MCF 10A (cell line): ENCODE measurements at regions of chr5 and their contacts with region 1.

Region 1: DNA sequence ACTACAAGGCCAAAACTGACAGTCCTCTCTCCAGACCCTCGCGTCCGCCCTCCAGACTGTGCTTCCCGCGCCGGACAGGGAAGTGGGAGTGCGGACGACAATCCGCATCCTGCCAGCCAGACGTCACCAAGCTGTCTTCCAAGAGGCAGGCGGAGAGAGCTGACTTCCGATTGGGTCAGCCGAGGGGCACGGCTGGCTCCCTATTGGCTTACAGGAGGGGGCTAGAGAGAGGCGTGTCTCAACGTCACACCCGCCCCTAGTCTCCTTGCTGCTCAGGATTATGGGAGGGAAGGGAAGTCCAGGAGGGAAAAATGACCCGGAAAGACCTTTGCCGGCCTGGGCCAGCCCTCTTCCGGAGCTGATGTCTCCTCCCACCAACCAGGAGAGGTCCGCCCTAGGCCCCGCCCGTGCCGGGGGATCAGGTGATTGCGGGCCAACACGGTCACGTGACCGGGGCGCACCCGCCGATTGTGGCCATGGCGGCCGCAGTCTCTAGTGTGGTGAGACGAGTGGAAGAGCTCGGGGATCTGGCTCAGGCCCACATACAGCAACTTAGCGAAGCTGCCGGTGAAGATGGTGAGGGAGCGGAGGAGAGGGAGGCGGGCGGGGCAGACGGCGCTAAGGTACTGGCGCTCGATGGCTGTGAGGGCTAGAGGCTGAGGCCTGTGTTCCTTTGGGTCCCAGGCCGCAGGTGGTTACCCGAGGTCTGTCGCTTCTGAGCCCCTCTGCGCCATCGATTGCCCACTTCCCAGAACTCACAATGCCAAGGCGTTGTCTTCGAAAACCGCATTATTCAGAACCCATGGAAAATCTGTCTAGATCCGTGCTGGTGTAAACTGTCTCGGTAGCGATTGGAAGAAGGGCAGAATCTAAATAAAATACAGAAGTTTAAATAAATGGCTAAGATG is at the start of gene RIMOC1:
- DNase-seq: peak; percentile 99
- H3K4me3 Mint-ChIP-seq: peak within 1 kb of the TSS; percentile 97
- H3K27ac Mint-ChIP-seq: peak within 1 kb of the TSS; percentile 100
- H3K4me1 Mint-ChIP-seq: peaks cover 36% of the 10 kb centered on the region
- H3K27me3 Mint-ChIP-seq: no peaks in the 10 kb centered on the region
- CTCF ChIP-seq: no peak
- total RNA-seq, gene RIMOC1: 40.4 and 45.4 TPM in 2 replicates

Region 2: GRCh38 chr5:41610402-41610801 is 293.7 kb before region 1 on chr5:
- CTCF ChIA-PET with region 1: no interaction called
- POLR2A ChIA-PET with region 1: no interaction called
- intact Hi-C with region 1: no loop called
- DNase-seq: no peak
- H3K4me3 Mint-ChIP-seq: no peak overlapping the region
- H3K27ac Mint-ChIP-seq: no peak overlapping the region
- H3K4me1 Mint-ChIP-seq: no peaks in the 10 kb centered on the region
- H3K27me3 Mint-ChIP-seq: peaks cover 24% of the 10 kb centered on the region
- CTCF ChIP-seq: no peak

Region 3: DNA sequence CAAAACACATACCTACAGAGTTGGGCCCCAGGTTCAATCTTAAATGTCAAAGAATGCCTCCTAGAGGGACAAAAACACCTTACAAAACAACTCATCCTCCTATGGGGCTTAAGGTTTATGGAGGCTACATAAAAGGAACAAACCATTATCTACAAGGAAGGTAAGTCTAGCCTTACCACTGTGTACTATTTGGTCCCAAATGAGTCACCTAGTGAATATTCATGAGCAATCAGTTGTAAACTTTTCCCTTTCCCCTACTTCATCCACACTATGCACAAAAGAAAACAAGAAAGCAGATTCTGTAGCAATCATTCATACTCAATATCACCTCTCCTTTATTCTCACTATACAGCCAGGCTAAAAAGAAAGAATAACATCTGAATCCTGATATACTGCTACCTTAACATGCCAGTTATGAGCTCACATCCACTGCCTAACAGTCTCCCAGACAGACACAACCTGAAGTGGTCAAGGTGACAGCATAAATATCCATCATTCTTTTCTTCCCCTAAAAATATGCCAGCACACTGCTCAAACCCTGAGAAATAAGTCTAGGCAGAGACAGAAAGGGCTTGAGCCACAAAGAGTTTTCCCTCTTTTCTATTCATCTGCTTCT is 40.2 kb before region 1 on chr5:
- CTCF ChIA-PET with region 1: interaction called, 4 read pairs
- POLR2A ChIA-PET with region 1: interaction called, 57 read pairs
- intact Hi-C with region 1: loop called (anchors 1 kb)
- DNase-seq: no peak
- H3K4me3 Mint-ChIP-seq: no peak overlapping the region
- H3K27ac Mint-ChIP-seq: peak overlapping the region; percentile 58
- H3K4me1 Mint-ChIP-seq: peaks cover 31% of the 10 kb centered on the region
- H3K27me3 Mint-ChIP-seq: no peaks in the 10 kb centered on the region
- CTCF ChIP-seq: no peak

Region 4: GRCh38 chr5:41869739-41870626 is 34.2 kb before region 1 on chr5 and contains the start of gene OXCT1:
- CTCF ChIA-PET with region 1: interaction called, 4 read pairs
- POLR2A ChIA-PET with region 1: interaction called, 57 read pairs
- intact Hi-C with region 1: loop called (anchors 1 kb)
- DNase-seq: peak; percentile 87
- H3K4me3 Mint-ChIP-seq: peak within 1 kb of the TSS; percentile 89
- H3K27ac Mint-ChIP-seq: peak within 1 kb of the TSS; percentile 86
- H3K4me1 Mint-ChIP-seq: peaks cover 24% of the 10 kb centered on the region
- H3K27me3 Mint-ChIP-seq: no peaks in the 10 kb centered on the region
- CTCF ChIP-seq: no peak
- total RNA-seq, gene OXCT1: 47.1 and 48.6 TPM in 2 replicates

Region 5: GRCh38 chr5:41876678-41877077 is 27.5 kb before region 1 on chr5:
- CTCF ChIA-PET with region 1: interaction called, 4 read pairs
- POLR2A ChIA-PET with region 1: interaction called, 57 read pairs
- intact Hi-C with region 1: no loop called
- DNase-seq: no peak
- H3K4me3 Mint-ChIP-seq: no peak overlapping the region
- H3K27ac Mint-ChIP-seq: no peak overlapping the region
- H3K4me1 Mint-ChIP-seq: no peaks in the 10 kb centered on the region
- H3K27me3 Mint-ChIP-seq: no peaks in the 10 kb centered on the region
- CTCF ChIP-seq: no peak

Region 6: GRCh38 chr5:41918105-41918504 is 14.0 kb after region 1 on chr5:
- CTCF ChIA-PET with region 1: no interaction called
- POLR2A ChIA-PET with region 1: interaction called, 20 read pairs
- intact Hi-C with region 1: no loop called
- DNase-seq: no peak
- H3K4me3 Mint-ChIP-seq: no peak overlapping the region
- H3K27ac Mint-ChIP-seq: no peak overlapping the region
- H3K4me1 Mint-ChIP-seq: no peaks in the 10 kb centered on the region
- H3K27me3 Mint-ChIP-seq: no peaks in the 10 kb centered on the region
- CTCF ChIP-seq: no peak

Region 7: DNA sequence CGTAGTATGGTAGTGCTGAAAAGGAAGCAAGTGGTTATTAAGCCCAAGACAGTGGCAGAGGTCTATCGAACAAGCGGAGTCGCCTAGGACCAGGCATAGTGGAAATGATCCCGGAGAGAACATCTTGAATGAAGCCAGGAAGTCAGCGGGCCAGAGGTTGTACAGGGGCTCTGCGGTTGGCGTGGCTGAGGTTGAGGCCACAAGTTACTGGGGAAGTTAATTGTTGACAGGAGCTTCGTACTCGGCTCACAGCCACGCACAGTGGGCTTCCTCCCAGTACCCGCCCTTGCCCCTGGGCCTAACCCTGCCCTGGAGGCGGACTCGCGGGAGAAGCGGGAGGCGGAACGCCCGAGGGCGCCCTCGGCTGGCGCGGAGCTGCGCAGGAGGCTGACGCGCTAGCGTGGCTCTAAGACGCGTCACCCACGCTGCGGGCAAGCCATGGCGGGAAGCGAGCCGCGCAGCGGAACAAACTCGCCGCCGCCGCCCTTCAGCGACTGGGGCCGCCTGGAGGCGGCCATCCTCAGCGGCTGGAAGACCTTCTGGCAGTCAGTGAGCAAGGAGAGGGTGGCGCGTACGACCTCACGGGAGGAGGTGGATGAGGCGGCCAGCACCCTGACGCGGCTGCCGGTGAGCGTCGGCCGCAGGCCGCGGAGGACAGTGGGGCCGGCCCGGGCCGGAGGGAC is 20.9 kb after region 1 on chr5 and contains the start of gene FBXO4:
- CTCF ChIA-PET with region 1: interaction called, 4 read pairs
- POLR2A ChIA-PET with region 1: interaction called, 47 read pairs
- intact Hi-C with region 1: loop called (anchors 2 kb)
- DNase-seq: peak; percentile 69
- H3K4me3 Mint-ChIP-seq: peak within 1 kb of the TSS; percentile 68
- H3K27ac Mint-ChIP-seq: peak within 1 kb of the TSS; percentile 86
- H3K4me1 Mint-ChIP-seq: no peaks in the 10 kb centered on the region
- H3K27me3 Mint-ChIP-seq: no peaks in the 10 kb centered on the region
- CTCF ChIP-seq: peak; percentile 23
- total RNA-seq, gene FBXO4: 18.4 and 20.2 TPM in 2 replicates

Region 8: DNA sequence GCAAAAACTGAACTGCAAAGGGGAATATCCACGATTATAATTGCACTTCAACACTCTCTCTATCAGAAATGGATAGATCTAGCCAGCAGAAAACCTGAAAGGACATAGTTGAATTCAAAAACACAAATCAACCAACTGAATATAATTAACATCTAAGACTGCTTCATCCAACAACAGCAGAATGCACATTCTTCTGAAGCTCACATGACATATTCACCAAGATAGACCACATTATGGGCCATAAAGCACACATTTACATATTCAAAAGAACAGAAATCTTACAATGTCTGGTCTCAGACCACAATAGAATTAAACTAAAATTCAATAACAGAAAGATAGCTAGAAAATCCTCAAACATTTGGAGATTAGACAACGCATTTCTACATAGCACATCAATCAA is 139.3 kb after region 1 on chr5:
- CTCF ChIA-PET with region 1: no interaction called
- POLR2A ChIA-PET with region 1: no interaction called
- intact Hi-C with region 1: no loop called
- DNase-seq: no peak
- H3K4me3 Mint-ChIP-seq: no peak overlapping the region
- H3K27ac Mint-ChIP-seq: no peak overlapping the region
- H3K4me1 Mint-ChIP-seq: no peaks in the 10 kb centered on the region
- H3K27me3 Mint-ChIP-seq: no peaks in the 10 kb centered on the region
- CTCF ChIP-seq: no peak